HEK293 (cell line): ENCODE measurements at regions of chr17 and their contacts with region 1.

Region 1: DNA sequence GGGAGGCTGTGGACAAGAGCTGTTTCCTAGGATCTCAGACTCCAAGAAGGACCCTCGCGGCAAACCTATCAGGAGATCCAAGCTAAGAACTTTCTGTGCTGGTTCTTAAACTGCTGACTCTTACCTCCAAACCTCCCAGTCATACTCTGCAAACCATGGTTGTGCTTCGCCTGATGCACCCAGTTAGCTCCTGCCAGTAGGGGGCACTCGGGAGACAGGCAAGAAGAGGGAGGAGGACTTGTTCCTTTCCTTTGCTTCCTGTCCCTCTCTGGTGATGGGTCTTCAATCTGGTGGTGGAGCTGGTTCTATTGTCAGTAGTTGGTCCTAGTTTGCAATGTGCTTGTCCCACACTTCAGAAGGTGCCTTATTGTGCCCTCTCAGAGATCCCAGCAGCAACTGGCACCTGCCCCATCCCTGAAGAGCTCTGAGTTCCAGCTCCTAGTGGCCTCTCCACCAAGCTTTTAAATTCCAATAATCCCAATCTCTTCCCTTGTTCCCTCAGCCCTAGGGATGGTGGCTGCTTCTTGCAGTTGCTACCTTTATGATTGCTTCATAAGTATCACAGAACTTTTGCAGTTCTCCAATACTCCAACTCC is 113.5 kb upstream of the RPL38 start:
- H3K4me3 ChIP-seq: no peak overlapping the region
- H3K27ac ChIP-seq: no peak overlapping the region
- H3K4me1 ChIP-seq: no peaks in the 10 kb centered on the region
- CTCF ChIP-seq: peak; percentile 42; the same call in 1 of the 2 replicates

Region 2: DNA sequence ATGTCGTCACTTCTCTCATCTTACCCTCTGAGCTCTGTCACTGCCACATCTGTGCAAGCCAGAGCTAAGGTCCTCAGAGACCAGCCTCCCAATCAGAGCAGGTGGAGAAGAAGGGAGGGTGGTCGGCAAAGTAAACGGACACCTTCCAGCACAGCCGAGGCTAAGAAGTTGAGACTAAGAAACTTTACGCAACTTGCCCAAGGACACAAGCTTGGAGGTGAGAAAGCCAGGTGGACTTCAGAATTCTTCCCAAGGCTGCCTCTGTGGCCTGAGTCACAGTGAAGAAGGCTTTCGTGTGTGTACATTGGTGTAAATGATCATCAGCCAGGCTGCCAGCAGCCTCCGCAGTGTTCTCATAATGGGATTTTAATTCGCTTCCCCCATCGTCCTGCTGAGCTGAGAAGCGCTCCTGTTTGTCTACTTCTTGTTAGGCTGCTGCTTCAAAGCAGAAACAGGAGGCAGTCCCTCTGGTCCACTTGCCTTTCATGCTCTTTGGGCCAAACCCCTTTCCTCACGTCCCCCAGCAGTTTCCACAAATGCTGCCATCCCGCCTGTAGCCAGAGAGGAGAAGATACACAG is 11.5 kb before region 1 on chr17:
- CTCF ChIA-PET with region 1: interaction called, 25 read pairs
- POLR2A ChIA-PET with region 1: no interaction called
- H3K4me3 ChIP-seq: no peak overlapping the region
- H3K27ac ChIP-seq: no peak overlapping the region
- H3K4me1 ChIP-seq: no peaks in the 10 kb centered on the region
- CTCF ChIP-seq: no peak

Region 3: DNA sequence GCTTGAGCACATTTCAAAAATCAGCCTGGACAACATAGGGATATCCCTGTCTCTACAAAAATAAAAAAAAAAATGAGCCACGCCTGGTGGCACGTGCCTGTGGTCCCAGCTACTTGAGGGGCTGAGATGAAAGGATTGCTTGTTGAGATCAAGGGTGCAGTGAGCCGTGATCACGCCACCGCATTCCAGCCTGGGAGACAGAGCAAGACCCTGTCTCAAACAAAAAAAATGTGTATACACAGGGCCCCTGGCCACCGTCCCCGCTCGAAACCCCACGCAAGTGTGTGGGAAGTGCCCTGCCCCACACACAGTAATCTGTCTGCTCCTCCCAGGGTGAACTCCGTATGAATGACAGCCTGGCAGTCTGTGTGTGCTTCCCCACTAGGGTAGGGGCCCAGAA is 20.5 kb after region 1 on chr17:
- CTCF ChIA-PET with region 1: interaction called, 14 read pairs
- POLR2A ChIA-PET with region 1: no interaction called
- H3K4me3 ChIP-seq: no peak overlapping the region
- H3K27ac ChIP-seq: no peak overlapping the region
- H3K4me1 ChIP-seq: no peaks in the 10 kb centered on the region
- CTCF ChIP-seq: no peak

Region 4: GRCh38 chr17:74152591-74153455 is 62.9 kb after region 1 on chr17:
- CTCF ChIA-PET with region 1: interaction called, 13 read pairs
- POLR2A ChIA-PET with region 1: no interaction called
- H3K4me3 ChIP-seq: no peak overlapping the region
- H3K27ac ChIP-seq: no peak overlapping the region
- H3K4me1 ChIP-seq: no peaks in the 10 kb centered on the region
- CTCF ChIP-seq: no peak

Region 5: DNA sequence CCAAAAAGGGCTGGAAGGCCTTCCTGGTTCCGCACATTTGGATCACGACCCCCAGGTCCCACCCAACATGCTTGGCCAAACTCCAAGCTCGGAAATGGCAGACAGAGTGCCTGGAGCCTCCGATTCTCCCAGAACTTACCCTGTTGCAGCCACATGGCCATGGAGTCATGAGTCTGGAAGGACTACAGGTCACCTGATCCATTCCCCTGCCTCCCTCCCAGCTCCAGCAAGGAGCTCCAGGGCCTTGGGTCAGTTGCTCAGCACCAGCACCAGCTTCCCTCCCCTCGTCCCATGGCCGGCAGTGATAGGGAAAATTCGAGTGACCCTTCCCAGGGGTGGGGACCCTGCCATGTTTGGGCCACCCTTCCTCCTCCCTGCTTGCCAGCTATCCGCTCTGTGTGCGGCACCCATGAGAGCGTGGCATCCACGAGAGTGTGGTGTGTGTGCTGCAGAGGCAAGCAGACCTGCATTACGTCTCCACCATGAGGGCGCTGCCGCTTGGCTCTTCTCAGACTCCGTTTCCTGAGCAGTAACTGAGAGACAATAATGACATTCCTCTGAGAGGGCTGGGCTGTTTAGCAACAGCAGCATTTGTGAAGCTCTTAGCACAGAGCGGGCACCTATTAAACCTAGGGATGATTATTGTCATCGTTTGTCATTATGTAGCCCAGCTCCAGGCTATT is 92.2 kb after region 1 on chr17:
- CTCF ChIA-PET with region 1: interaction called, 78 read pairs
- POLR2A ChIA-PET with region 1: no interaction called
- H3K4me3 ChIP-seq: no peak overlapping the region
- H3K27ac ChIP-seq: no peak overlapping the region
- H3K4me1 ChIP-seq: no peaks in the 10 kb centered on the region
- CTCF ChIP-seq: no peak